ENCODE measurements at regions of chr6 and their contacts with region 1.

Region 1: GRCh38 chr6:142845624-142846458 is 99.1 kb downstream of the HIVEP2 start:
- DNase-seq: peak; percentile 97
- H3K4me3 ChIP-seq: no peak overlapping the region
- H3K27ac ChIP-seq: peak overlapping the region; percentile 76
- H3K4me1 ChIP-seq: peaks cover 64% of the 10 kb centered on the region
- H3K27me3 ChIP-seq: no peaks in the 10 kb centered on the region
- CTCF ChIP-seq: no peak
- POLR2A ChIP-seq: no peak

Region 2: DNA sequence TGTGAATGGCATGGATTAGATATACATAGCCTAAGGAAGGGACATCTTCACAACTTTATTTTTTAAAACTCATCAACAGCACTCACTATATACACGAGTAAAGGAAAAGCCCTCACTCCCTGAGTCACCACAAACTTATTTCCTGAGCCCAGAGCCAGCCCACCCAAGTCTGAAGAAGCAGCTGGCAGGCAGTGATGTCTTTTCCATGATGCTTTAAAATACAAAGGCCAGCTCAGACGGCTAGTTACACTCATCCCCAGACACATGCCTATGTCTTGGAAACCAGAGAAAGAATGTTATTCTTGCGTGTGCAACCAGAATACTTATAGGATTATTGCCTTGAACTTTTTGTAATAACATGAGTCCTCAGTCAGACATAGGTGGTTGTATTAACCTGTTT is 429.7 kb before region 1 on chr6:
- CTCF ChIA-PET with region 1: no interaction called
- POLR2A ChIA-PET with region 1: no interaction called
- dilution Hi-C with region 1: no loop called
- intact Hi-C with region 1: loop called (anchors 10 kb)
- DNase-seq: peak; percentile 93
- H3K4me3 ChIP-seq: no peak overlapping the region
- H3K27ac ChIP-seq: peak overlapping the region; percentile 99
- H3K4me1 ChIP-seq: peaks cover 56% of the 10 kb centered on the region
- H3K27me3 ChIP-seq: no peaks in the 10 kb centered on the region
- CTCF ChIP-seq: no peak
- POLR2A ChIP-seq: peak; percentile 22

Region 3: DNA sequence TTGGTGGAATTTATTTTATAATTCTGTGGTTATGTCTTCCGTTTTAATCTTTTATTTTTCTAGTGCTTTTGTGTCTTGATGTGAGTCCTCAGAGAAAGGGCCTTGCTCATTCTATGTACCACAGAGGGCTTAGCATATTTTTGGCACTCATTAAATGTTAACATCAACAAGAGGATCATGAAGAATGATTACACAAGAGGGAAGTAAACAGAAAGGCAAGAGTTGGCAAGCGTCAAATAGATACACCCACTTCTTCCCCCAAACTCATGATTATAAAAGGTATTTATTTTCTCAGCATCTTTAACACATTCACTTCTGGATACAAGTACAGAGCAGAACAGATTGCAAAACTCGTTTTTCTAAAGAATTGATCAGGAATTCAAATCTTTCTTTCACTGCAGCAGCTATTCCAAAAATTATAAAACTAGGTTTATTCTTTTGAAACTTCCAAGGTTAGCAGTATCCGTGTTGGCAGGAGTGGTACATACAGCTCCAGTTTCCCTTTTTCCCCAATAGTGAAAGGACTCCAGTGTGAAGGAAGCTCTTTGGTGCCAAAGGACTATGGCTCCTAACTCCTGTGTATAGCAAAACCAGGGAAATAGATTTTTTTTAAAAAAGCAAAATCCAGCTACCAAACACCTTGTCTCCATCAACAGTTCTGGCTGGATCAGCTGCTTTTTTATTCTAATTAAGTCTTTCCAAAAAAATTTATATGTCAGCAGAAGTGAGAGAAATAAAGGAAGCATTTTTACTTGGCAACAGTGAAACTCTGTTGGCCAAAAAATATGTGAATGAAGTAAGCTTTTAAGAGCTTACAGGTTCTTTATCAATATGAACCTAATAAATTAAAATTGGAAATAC is 322.1 kb before region 1 on chr6:
- CTCF ChIA-PET with region 1: no interaction called
- POLR2A ChIA-PET with region 1: no interaction called
- dilution Hi-C with region 1: no loop called
- intact Hi-C with region 1: no loop called
- DNase-seq: no peak
- H3K4me3 ChIP-seq: no peak overlapping the region
- H3K27ac ChIP-seq: no peak overlapping the region
- H3K4me1 ChIP-seq: no peaks in the 10 kb centered on the region
- H3K27me3 ChIP-seq: peaks cover 11 to 14% of the 10 kb centered on the region in 2 experiments
- CTCF ChIP-seq: no peak
- POLR2A ChIP-seq: no peak

Region 4: GRCh38 chr6:142819603-142820337 is 26.1 kb before region 1 on chr6:
- CTCF ChIA-PET with region 1: interaction called, 6 read pairs
- POLR2A ChIA-PET with region 1: interaction called, 3 read pairs
- dilution Hi-C with region 1: no loop called
- intact Hi-C with region 1: loop called (anchors 1 kb)
- DNase-seq: peak; percentile 95
- H3K4me3 ChIP-seq: peak overlapping the region; percentile 16 to 71 (median 27)
- H3K27ac ChIP-seq: peak overlapping the region; percentile 93
- H3K4me1 ChIP-seq: peaks cover 16% of the 10 kb centered on the region
- H3K27me3 ChIP-seq: no peaks in the 10 kb centered on the region
- CTCF ChIP-seq: no peak
- POLR2A ChIP-seq: no peak

Region 5: DNA sequence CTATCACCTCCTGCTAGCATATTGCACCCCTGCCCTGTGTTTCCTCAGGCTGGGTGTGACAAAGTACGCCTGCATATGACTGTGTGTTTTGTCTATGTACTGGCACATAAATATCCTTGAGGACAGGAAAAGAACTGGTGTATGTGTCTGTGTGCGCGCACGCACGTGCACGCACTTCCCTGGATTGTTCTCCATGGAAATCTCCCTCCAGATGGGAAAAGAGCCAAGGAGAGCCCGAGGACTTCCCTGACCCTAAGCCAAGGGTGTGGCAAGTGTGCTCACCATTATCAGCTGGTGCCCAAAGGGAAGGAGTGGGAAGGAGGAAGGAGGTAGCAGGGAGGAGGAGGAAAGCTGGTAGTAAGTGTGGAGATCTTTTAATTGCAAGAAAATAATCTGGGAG is 18.5 kb before region 1 on chr6:
- CTCF ChIA-PET with region 1: interaction called, 7 read pairs
- POLR2A ChIA-PET with region 1: interaction called, 3 read pairs
- dilution Hi-C with region 1: no loop called
- intact Hi-C with region 1: loop called (anchors 1 kb)
- DNase-seq: peak; percentile 98
- H3K4me3 ChIP-seq: no peak overlapping the region
- H3K27ac ChIP-seq: peak overlapping the region; percentile 59
- H3K4me1 ChIP-seq: peaks cover 15% of the 10 kb centered on the region
- H3K27me3 ChIP-seq: no peaks in the 10 kb centered on the region
- CTCF ChIP-seq: no peak
- POLR2A ChIP-seq: no peak

Region 6: GRCh38 chr6:142871910-142872331 is 26.1 kb after region 1 on chr6:
- CTCF ChIA-PET with region 1: interaction called, 4 read pairs
- POLR2A ChIA-PET with region 1: interaction called, 3 read pairs
- dilution Hi-C with region 1: no loop called
- intact Hi-C with region 1: loop called (anchors 1 kb)
- DNase-seq: peak; percentile 90
- H3K4me3 ChIP-seq: no peak overlapping the region
- H3K27ac ChIP-seq: peak overlapping the region; percentile 59
- H3K4me1 ChIP-seq: peaks cover 40% of the 10 kb centered on the region
- H3K27me3 ChIP-seq: no peaks in the 10 kb centered on the region
- CTCF ChIP-seq: no peak
- POLR2A ChIP-seq: no peak

Region 7: DNA sequence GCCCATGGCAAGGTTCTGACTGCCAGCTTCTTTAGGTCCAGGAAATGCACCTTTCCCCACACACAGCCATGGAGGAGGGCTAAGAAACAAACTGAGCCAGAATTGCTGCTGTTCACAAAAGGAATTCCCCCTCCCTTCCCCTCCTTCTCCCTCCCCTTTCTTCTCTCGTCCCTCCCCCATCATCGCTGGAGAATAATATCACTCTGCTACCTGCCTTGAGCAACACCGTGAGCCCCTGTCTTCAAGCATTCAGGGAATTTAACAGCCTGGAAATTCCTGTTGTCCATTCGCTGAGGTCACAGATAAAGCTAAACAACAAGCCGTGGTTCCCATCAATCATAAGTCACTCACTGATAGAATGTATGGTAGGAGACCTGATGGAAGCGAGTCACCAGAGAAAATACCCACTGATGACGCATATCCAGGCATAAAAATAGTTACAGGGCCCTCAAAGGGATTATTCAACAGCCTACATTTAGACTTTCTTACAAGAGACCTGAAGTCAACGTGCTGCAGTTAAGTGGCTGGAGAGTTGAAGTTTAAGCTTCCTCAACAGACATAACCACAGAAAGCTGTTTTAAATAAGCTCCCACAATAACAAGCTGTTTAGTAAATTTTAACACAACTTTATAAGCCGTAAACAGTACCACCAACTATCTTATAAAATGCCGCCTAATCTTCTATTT is 39.5 kb after region 1 on chr6:
- CTCF ChIA-PET with region 1: interaction called, 5 read pairs
- POLR2A ChIA-PET with region 1: interaction called, 3 read pairs
- dilution Hi-C with region 1: no loop called
- intact Hi-C with region 1: loop called (anchors 1 kb)
- DNase-seq: peak; percentile 98
- H3K4me3 ChIP-seq: peak overlapping the region in 2 of 3 experiments; percentile 1 to 9
- H3K27ac ChIP-seq: peak overlapping the region; percentile 89
- H3K4me1 ChIP-seq: peaks cover 16% of the 10 kb centered on the region
- H3K27me3 ChIP-seq: no peaks in the 10 kb centered on the region
- CTCF ChIP-seq: no peak
- POLR2A ChIP-seq: peak; percentile 49

Region 8: GRCh38 chr6:142926494-142927270 is 80.8 kb after region 1 on chr6:
- CTCF ChIA-PET with region 1: no interaction called
- POLR2A ChIA-PET with region 1: no interaction called
- dilution Hi-C with region 1: no loop called
- intact Hi-C with region 1: loop called (anchors 1 kb)
- DNase-seq: peak; percentile 82
- H3K4me3 ChIP-seq: peak overlapping the region; percentile 47 to 76 (median 60)
- H3K27ac ChIP-seq: peak overlapping the region; percentile 79
- H3K4me1 ChIP-seq: peaks cover 16% of the 10 kb centered on the region
- H3K27me3 ChIP-seq: no peaks in the 10 kb centered on the region
- CTCF ChIP-seq: no peak
- POLR2A ChIP-seq: peak; percentile 34

Region 9: DNA sequence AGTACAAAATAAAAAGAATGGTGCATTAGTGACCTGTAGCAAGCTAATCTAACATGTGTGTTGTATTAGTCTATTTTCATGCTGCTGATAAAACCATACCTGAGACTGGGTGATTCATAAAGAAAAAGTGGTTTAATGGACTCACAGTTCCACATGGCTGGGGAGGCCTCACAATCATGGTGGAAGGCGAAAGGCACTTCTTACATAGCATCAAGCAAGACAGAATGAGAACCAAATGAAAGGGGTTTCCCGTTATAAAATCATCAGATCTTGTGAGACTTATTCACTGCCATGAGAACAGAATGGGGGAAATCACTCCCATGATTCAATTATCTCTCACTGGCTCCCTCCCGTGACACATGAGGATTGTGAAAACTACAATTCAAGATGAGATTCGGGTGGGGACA is 169.5 kb after region 1 on chr6:
- CTCF ChIA-PET with region 1: no interaction called
- POLR2A ChIA-PET with region 1: no interaction called
- dilution Hi-C with region 1: no loop called
- intact Hi-C with region 1: no loop called
- DNase-seq: no peak
- H3K4me3 ChIP-seq: no peak overlapping the region
- H3K27ac ChIP-seq: no peak overlapping the region
- H3K4me1 ChIP-seq: no peaks in the 10 kb centered on the region
- H3K27me3 ChIP-seq: no peaks in the 10 kb centered on the region
- CTCF ChIP-seq: no peak
- POLR2A ChIP-seq: no peak